PC-3 (cell line): ENCODE measurements at regions of chr11 and their contacts with region 1.

Region 1: GRCh38 chr11:129652828-129653227 is 162.8 kb upstream of the TMEM45B start:
- DNase-seq: peak; percentile 98
- ATAC-seq: peak; percentile 99
- H3K4me3 ChIP-seq: no peak overlapping the region
- H3K27ac ChIP-seq: peak overlapping the region; percentile 22
- H3K4me1 ChIP-seq: peaks cover 16% of the 10 kb centered on the region
- H3K27me3 ChIP-seq: no peaks in the 10 kb centered on the region
- CTCF ChIP-seq: no peak

Region 2: GRCh38 chr11:129639300-129639699 is 13.5 kb before region 1 on chr11:
- CTCF ChIA-PET with region 1: no interaction called
- POLR2A ChIA-PET with region 1: interaction called, 4 read pairs
- intact Hi-C with region 1: loop called (anchors 1 kb)
- DNase-seq: peak; percentile 99
- ATAC-seq: peak; percentile 65
- H3K4me3 ChIP-seq: 0 out of 2 replicates have a peak overlapping the region, but pooled peaks have one; percentile 13
- H3K27ac ChIP-seq: peak overlapping the region; percentile 92
- H3K4me1 ChIP-seq: peaks cover 68% of the 10 kb centered on the region
- H3K27me3 ChIP-seq: no peaks in the 10 kb centered on the region
- CTCF ChIP-seq: no peak

Region 3: DNA sequence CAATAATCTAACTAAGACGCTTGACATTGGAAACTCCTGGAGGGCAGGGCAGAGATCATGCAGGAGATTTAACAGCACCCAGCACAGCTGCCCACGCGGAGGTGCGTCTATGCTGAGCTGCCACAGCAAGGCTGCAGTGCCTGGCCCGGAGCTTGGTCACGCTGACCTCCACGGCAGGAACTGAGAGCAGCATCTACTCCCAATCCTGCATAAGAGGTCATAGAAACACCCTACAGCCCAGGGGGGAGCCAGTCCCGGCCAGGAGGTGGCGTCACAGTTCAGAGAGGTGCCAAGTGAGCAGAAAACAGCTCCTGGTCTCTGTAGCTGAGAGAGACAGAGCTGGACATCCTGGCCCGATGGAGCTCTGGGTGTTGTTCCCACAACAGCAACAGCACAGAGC is 41.7 kb after region 1 on chr11:
- CTCF ChIA-PET with region 1: no interaction called
- POLR2A ChIA-PET with region 1: no interaction called
- intact Hi-C with region 1: no loop called
- DNase-seq: peak; percentile 36
- ATAC-seq: no peak
- H3K4me3 ChIP-seq: no peak overlapping the region
- H3K27ac ChIP-seq: no peak overlapping the region
- H3K4me1 ChIP-seq: no peaks in the 10 kb centered on the region
- H3K27me3 ChIP-seq: 0 out of 2 replicates have a peak, but pooled peaks cover 4% of the 10 kb centered on the region
- CTCF ChIP-seq: peak; percentile 57

Region 4: DNA sequence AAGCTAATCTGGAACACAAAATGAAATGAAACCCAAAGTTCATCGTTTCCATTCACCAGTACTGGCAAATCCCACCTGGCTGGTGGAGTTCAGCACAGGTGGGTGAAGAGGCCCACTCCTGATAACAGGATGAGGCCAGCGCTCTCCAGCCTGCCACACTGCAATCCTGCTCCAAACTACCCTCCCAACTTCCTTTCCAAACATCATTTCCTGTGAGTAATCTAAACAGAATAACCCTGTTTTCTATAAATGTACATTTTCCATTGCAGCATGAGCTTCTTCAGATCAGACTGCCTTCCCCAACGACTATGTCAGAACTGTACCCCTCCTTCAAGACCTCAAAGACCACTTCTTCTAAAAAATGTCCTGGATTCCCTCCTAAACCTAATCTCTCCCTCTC is 258.5 kb after region 1 on chr11:
- CTCF ChIA-PET with region 1: no interaction called
- POLR2A ChIA-PET with region 1: no interaction called
- intact Hi-C with region 1: no loop called
- DNase-seq: peak; percentile 43
- ATAC-seq: peak; percentile 95
- H3K4me3 ChIP-seq: no peak overlapping the region
- H3K27ac ChIP-seq: peak overlapping the region; percentile 28
- H3K4me1 ChIP-seq: peaks cover 9% of the 10 kb centered on the region
- H3K27me3 ChIP-seq: no peaks in the 10 kb centered on the region
- CTCF ChIP-seq: no peak